CD4-positive, alpha-beta T cell (primary cell): ENCODE measurements at regions of chr17 and their contacts with region 1.

Region 1: DNA sequence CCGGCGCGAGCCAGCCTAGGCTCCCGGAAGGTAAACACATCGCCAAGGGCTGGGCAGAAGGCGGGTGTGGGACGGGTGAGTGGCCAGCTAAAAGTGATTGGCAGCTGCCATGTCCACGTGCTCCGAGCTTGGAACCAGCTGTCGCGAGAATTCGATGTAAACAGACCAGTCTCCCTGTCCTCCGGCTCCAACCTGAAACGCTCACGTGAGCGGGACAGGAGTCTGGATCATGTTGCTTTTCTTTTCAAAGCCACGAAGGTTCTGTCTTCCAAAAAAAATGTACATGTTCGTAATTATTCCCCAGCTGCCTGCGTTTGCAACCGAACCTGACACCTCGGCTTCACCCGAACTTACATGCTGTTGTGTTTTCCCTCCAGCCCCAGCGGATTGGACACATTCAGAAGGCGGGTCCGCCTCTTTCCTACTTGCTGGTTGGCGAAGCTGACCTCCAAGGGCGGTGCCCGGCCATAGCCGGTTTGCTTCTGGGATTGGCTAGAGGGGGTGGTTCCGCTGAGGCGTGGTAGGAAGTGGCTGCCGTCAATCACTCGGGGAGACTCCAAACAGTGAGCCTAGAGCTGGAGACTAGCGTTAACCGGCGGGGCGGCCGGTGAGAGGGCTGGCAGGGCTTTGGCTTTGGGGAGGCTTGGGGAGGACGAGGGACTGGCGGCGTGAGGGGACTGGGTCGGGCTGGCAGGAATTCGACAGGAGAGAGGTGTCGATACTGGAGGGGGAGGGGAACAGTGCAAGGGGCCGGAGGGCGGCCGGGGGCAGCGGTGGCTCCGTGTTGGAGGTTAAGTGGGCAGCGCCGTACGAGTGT is at the start of gene BCAS3:
- DNase-seq: peak; percentile 92 to 98 (median 94)
- ATAC-seq: peak; percentile 96
- H3K4me3 ChIP-seq: peak within 1 kb of the TSS; percentile 66
- H3K4me3 Mint-ChIP-seq: peak within 1 kb of the TSS; percentile 97
- H3K27ac ChIP-seq: peak within 1 kb of the TSS; percentile 60 to 76
- H3K27ac Mint-ChIP-seq: peak within 1 kb of the TSS; percentile 93
- H3K4me1 ChIP-seq: peaks cover 13% of the 10 kb centered on the region
- H3K4me1 Mint-ChIP-seq: peaks cover 25% of the 10 kb centered on the region
- H3K27me3 ChIP-seq: no peaks in the 10 kb centered on the region
- H3K27me3 Mint-ChIP-seq: no peaks in the 10 kb centered on the region
- CTCF ChIP-seq: no peak
- total RNA-seq, gene BCAS3: 20.1 to 31.8 TPM

Region 2: DNA sequence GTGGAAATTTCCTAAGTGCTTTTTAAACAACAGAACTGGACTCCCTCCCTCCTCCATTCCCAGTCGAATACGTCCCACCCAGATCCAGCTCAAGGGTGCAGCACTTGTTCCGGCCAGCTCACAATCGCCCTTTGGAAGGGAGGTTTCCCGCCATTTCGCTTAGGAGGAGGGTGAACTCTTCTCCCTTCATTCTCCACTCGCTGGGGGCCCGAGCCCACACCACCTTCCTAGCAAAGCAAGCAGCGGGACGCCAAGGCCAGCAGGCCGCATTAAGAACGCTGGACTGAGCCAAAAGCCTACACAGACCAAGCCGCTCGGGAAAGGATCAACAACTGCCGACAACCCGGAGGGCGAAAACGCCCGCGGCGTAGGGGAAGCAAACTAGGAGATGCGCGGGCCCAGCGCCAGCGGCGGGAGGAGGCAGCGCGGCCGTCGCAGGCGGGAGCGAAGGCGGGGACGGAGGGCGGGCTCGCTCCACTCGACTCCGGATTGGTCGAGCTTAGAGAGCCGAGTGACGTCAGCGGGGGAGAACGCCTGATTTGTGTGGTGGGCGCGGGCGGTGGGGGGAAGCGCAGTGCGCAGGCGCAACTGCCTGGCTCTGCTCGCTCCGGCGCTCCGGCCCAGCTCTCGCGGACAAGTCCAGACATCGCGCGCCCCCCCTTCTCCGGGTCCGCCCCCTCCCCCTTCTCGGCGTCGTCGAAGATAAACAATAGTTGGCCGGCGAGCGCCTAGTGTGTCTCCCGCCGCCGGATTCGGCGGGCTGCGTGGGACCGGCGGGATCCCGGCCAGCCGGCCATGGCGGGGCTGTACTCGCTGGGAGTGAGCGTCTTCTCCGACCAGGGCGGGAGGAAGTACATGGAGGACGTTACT is 77.7 kb before region 1 on chr17 and contains the start of gene PPM1D:
- CTCF ChIA-PET with region 1: no interaction called
- POLR2A ChIA-PET with region 1: interaction called, 22 read pairs
- intact Hi-C with region 1: loop called (anchors 2 kb)
- DNase-seq: peak; percentile 95 to 100 (median 97)
- ATAC-seq: peak; percentile 95
- H3K4me3 ChIP-seq: peak within 1 kb of the TSS; percentile 87
- H3K4me3 Mint-ChIP-seq: peak within 1 kb of the TSS; percentile 98
- H3K27ac ChIP-seq: peak within 1 kb of the TSS; percentile 84 to 87
- H3K27ac Mint-ChIP-seq: peak within 1 kb of the TSS; percentile 94
- H3K4me1 ChIP-seq: peaks cover 23% of the 10 kb centered on the region
- H3K4me1 Mint-ChIP-seq: peaks cover 50% of the 10 kb centered on the region
- H3K27me3 ChIP-seq: no peaks in the 10 kb centered on the region
- H3K27me3 Mint-ChIP-seq: no peaks in the 10 kb centered on the region
- CTCF ChIP-seq: no peak
- total RNA-seq, gene PPM1D: 18.1 to 18.3 TPM

Region 3: DNA sequence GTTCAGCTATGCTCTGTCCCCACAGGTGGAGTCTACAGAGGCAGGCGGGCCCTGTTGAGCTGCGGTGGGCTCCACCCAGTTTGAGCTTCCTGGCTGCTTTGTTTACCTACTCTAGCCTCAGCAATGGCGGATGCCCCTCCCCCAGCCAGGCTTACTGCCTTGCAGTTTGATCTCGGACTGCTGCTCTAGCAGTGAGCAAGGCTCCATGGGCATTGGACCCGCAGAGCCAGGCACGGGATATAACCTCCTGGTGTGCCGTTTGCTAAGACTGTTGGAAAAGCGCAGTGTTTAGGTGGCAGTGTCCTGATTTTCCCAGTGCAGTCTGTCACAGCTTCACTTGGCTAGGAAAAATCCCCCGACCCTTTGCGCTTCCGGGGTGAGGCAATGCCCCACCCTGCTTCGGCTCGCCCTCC is 89.3 kb after region 1 on chr17:
- CTCF ChIA-PET with region 1: no interaction called
- POLR2A ChIA-PET with region 1: no interaction called
- intact Hi-C with region 1: no loop called
- DNase-seq: peak in 5 of 14 experiments; percentile 4 to 43 (median 7)
- ATAC-seq: no peak
- H3K4me3 ChIP-seq: no peak overlapping the region
- H3K4me3 Mint-ChIP-seq: no peak overlapping the region
- H3K27ac ChIP-seq: no peak overlapping the region
- H3K27ac Mint-ChIP-seq: no peak overlapping the region
- H3K4me1 ChIP-seq: peaks cover 18% of the 10 kb centered on the region
- H3K4me1 Mint-ChIP-seq: peaks cover 29% of the 10 kb centered on the region
- H3K27me3 ChIP-seq: no peaks in the 10 kb centered on the region
- H3K27me3 Mint-ChIP-seq: no peaks in the 10 kb centered on the region
- CTCF ChIP-seq: no peak

Region 4: DNA sequence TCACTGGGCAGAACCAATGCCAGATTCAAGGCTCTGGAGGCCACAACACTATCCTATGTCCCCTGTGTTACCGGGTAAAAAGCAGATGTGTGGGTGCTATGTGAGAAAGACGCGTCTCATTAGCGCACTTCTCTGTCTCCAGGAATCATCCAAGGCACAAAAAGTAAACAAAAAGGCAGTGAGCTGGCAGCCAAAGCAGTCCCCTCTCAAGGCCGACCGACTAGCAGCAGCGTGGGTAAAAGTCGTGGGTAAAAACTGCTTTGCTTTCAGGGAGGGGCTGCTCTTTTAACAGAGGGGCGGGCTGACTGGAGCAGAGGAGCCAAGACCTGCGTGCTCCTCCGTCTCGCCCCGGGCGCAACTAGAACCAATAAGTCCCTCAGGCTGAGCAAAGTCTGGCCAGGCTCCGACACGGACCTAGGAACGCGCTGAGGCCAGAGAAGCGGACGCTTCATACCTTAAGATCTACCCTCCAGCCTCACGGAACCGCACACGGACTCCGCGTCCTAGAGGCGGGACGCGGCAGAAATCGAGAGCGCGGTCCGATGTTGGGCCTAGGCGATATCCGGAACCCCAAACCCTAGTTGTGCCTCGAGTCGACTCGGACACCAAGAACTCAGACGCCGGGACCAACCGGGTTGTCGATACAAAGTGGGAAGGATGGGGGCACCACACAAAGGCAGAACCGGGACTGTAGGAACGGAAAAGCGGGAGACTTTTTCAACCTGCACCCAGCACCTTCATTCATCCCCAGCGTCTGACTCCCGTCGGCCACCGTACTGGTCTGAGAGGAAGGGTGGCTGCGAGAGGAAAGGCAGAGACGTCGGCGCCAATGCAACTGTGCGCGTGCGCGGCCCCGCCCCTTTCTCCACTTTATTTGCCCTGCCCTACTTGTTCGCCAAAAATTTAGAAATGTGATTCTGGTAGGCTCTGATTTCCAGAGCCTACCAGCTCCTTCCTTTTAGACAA is 1250.0 kb after region 1 on chr17 and contains the start of gene INTS2:
- CTCF ChIA-PET with region 1: no interaction called
- POLR2A ChIA-PET with region 1: no interaction called
- intact Hi-C with region 1: loop called in 1 of 2 experiments (anchors 2 kb)
- DNase-seq: peak; percentile 91 to 98 (median 95)
- ATAC-seq: peak; percentile 84
- H3K4me3 ChIP-seq: peak within 1 kb of the TSS; percentile 62
- H3K4me3 Mint-ChIP-seq: peak within 1 kb of the TSS; percentile 94
- H3K27ac ChIP-seq: peak within 1 kb of the TSS; percentile 68 to 78
- H3K27ac Mint-ChIP-seq: peak within 1 kb of the TSS; percentile 93
- H3K4me1 ChIP-seq: peaks cover 18% of the 10 kb centered on the region
- H3K4me1 Mint-ChIP-seq: peaks cover 27% of the 10 kb centered on the region
- H3K27me3 ChIP-seq: no peaks in the 10 kb centered on the region
- H3K27me3 Mint-ChIP-seq: peaks cover 6% of the 10 kb centered on the region
- CTCF ChIP-seq: no peak
- total RNA-seq, gene INTS2: 8.5 to 8.7 TPM